PC-3 (cell line): ENCODE measurements at regions of chr17 and their contacts with region 1.

Region 1: GRCh38 chr17:59451706-59452105 is 113.7 kb upstream of the DHX40 start:
- DNase-seq: peak; percentile 68
- ATAC-seq: peak; percentile 72
- H3K4me3 ChIP-seq: no peak overlapping the region
- H3K27ac ChIP-seq: no peak overlapping the region
- H3K4me1 ChIP-seq: peaks cover 8% of the 10 kb centered on the region; the same call in 1 of the 2 replicates
- H3K27me3 ChIP-seq: no peaks in the 10 kb centered on the region
- CTCF ChIP-seq: no peak

Region 2: GRCh38 chr17:59277031-59277430 is 174.7 kb before region 1 on chr17:
- CTCF ChIA-PET with region 1: no interaction called
- POLR2A ChIA-PET with region 1: interaction called, 13 read pairs
- intact Hi-C with region 1: no loop called
- DNase-seq: no peak
- ATAC-seq: no peak
- H3K4me3 ChIP-seq: no peak overlapping the region
- H3K27ac ChIP-seq: no peak overlapping the region
- H3K4me1 ChIP-seq: no peaks in the 10 kb centered on the region
- H3K27me3 ChIP-seq: no peaks in the 10 kb centered on the region
- CTCF ChIP-seq: no peak

Region 3: GRCh38 chr17:59950049-59950448 is 498.3 kb after region 1 on chr17:
- CTCF ChIA-PET with region 1: no interaction called
- POLR2A ChIA-PET with region 1: no interaction called
- intact Hi-C with region 1: no loop called
- DNase-seq: no peak
- ATAC-seq: no peak
- H3K4me3 ChIP-seq: no peak overlapping the region
- H3K27ac ChIP-seq: no peak overlapping the region
- H3K4me1 ChIP-seq: no peaks in the 10 kb centered on the region
- H3K27me3 ChIP-seq: no peaks in the 10 kb centered on the region
- CTCF ChIP-seq: no peak